Vagina (tissue), 2 donors: ENCODE measurements at regions of chr10 and their contacts with region 1.

Region 1: GRCh38 chr10:69914398-69915214 is 112.9 kb downstream of the COL13A1 start:
- DNase-seq: no peak
- H3K4me3 ChIP-seq: no peak overlapping the region
- H3K27ac ChIP-seq: no peak overlapping the region
- H3K4me1 ChIP-seq: peaks cover 40% of the 10 kb centered on the region
- H3K27me3 ChIP-seq: no peaks in the 10 kb centered on the region
- CTCF ChIP-seq: peak; percentile 85 to 94 (median 92)
- POLR2A ChIP-seq: no peak

Region 2: DNA sequence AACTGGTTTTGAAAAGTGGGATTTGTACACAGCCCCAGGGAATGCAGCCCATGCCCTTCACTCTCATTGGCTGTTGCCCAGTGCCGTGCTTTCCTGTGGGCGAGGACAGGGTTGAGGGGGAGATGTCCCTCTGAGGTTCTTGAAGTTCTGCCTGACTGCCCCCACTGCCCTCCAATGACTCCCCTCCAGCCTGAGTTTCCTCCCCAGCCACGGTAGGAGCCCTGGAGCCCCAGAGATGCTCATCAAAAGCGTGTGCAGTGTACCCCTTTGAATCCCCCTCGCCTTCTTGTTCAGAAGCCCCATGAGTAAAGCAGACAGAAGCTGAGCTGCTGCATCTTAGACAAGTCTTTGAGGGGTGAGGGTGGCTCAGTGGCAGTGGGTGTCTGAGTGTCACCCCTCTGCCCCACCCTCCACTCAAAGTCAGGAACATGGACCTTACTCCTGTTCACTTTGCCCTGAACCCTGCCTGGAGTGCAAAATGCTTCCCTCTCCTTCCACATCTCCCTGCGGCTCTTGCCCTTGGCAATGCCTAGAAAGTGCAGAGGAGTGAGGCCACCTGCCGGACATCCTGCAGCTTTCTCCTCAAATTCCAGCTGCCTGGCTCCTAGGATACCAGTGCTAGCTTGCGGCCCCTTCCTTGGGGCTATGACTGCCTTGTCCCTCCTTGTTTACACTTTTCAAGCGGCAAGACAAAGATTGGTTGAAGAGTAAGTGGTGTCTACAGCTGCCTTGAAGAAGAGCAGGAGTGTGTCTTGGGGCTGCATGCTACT is 264.6 kb before region 1 on chr10:
- intact Hi-C with region 1: loop called (anchors 5 kb)
- DNase-seq: no peak
- H3K4me3 ChIP-seq: no peak overlapping the region
- H3K27ac ChIP-seq: no peak overlapping the region
- H3K4me1 ChIP-seq: no peaks in the 10 kb centered on the region
- H3K27me3 ChIP-seq: no peaks in the 10 kb centered on the region
- CTCF ChIP-seq: no peak
- POLR2A ChIP-seq: no peak

Region 3: DNA sequence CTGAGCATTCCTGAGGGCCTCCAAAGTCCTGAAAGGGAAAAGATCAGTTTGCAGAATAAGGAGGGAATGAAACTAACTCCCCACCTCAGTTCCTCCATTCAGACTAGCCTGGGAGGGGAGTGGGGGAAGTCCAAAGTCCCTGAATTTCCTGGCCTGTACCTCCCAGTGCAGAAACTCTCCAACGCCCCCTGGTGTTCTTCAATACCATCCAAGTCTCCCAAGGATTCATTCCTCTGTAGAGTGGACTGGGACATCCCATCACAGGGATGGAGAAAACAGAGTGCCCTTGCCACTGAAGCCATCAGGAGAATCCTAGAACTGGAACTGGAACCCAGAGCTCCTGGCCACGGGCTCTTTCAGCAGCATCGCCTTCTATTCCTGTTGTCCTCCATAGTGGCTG is 114.5 kb before region 1 on chr10:
- intact Hi-C with region 1: loop called (anchors 10 kb)
- DNase-seq: no peak
- H3K4me3 ChIP-seq: no peak overlapping the region
- H3K27ac ChIP-seq: no peak overlapping the region
- H3K4me1 ChIP-seq: peaks cover 24% of the 10 kb centered on the region
- H3K27me3 ChIP-seq: no peaks in the 10 kb centered on the region
- CTCF ChIP-seq: peak in 2 of 3 experiments; percentile 40 to 47
- POLR2A ChIP-seq: no peak